Sigmoid colon (tissue), 7 donors: ENCODE measurements at regions of chr4 and their contacts with region 1.

Region 1: DNA sequence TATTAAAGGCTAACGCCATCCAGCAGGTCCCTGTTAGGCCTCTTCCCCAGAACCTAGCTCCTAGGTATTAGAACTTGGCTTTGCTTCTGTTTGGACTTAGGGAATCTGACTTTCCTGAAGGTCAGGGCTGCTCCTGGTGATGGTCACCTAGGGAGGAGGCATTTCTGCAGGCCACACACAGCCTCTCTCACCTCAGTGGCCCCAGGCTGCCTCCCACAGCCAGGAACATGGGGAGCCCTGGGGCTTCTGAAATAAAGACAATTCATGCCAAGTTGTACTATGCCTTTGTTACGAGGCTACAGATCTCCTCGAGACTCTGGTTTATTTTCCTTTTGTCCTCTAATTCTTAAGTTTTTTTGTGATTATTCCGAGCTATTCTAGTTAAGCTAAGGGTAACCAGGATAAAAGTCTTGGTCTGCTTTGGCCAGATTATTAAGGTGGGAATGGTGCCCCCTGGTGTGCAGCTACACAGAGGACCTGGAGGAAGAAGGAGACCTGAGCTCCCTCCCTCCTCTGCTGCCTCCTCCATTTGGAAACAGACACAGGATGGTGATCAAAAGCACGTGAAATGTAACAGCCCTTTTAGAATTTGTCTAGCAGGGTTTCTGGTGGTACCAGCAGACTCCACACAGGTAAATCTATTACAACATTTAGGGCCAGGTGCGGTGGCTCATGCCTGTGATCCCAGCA is 131.0 kb downstream of the DCLK2 start:
- DNase-seq: peak; percentile 80
- H3K4me3 ChIP-seq: no peak overlapping the region
- H3K27ac ChIP-seq: no peak overlapping the region
- H3K4me1 ChIP-seq: peaks cover 0 to 9% (median 0%) of the 10 kb centered on the region in 4 donors
- H3K27me3 ChIP-seq: no peaks in the 10 kb centered on the region
- CTCF ChIP-seq: peak in 3 of 4 experiments; percentile 51 to 53 (median 51)
- EP300 ChIP-seq: no peak
- POLR2A ChIP-seq: no peak

Region 2: GRCh38 chr4:149795256-149795655 is 414.0 kb before region 1 on chr4:
- intact Hi-C with region 1: no loop called
- DNase-seq: peak; percentile 33
- H3K4me3 ChIP-seq: no peak overlapping the region
- H3K27ac ChIP-seq: no peak overlapping the region
- H3K4me1 ChIP-seq: no peaks in the 10 kb centered on the region
- H3K27me3 ChIP-seq: no peaks in the 10 kb centered on the region
- CTCF ChIP-seq: no peak
- EP300 ChIP-seq: no peak
- POLR2A ChIP-seq: no peak

Region 3: GRCh38 chr4:149999485-150000074 is 209.7 kb before region 1 on chr4:
- intact Hi-C with region 1: loop called (anchors 1 kb)
- DNase-seq: peak; percentile 71
- H3K4me3 ChIP-seq: no peak overlapping the region
- H3K27ac ChIP-seq: no peak overlapping the region
- H3K4me1 ChIP-seq: peaks cover 0 to 46% (median 35%) of the 10 kb centered on the region in 4 donors
- H3K27me3 ChIP-seq: no peaks in the 10 kb centered on the region
- CTCF ChIP-seq: peak; percentile 57 to 75 (median 65)
- EP300 ChIP-seq: no peak
- POLR2A ChIP-seq: no peak

Region 4: DNA sequence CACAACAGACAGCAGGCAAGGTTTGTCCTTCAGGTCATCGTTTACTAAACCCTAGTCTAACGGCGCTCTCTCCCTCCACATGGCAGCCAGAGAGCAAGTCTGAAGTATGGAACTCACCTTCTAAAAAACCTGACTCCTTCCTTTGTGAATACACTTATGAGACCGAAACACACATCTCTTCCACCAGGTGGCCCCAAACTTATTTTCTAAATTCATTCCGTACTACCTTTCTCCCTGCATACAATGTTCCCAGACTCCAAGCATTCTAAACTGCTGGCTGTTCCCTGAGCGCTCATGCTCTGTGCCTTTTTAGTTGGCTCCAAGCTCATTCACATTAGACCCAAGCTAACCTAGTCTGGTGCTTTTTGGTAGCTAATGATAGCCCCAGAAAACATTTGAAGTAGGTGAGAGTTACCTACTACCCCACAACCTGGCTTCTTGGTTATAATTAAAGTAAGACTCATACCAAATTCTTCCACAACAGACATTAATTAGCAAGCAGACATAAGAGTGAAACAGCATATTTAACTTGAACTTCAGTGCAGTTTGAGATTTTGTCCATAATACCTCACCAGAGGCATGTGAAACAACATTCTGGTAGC is 198.7 kb before region 1 on chr4:
- intact Hi-C with region 1: loop called (anchors 5 kb)
- DNase-seq: no peak
- H3K4me3 ChIP-seq: no peak overlapping the region
- H3K27ac ChIP-seq: peak overlapping the region in 2 of 4 donors; percentile 16 to 35
- H3K4me1 ChIP-seq: peaks cover 0 to 32% (median 25%) of the 10 kb centered on the region in 4 donors
- H3K27me3 ChIP-seq: no peaks in the 10 kb centered on the region
- CTCF ChIP-seq: peak; percentile 22 to 66 (median 56)
- EP300 ChIP-seq: no peak
- POLR2A ChIP-seq: no peak

Region 5: DNA sequence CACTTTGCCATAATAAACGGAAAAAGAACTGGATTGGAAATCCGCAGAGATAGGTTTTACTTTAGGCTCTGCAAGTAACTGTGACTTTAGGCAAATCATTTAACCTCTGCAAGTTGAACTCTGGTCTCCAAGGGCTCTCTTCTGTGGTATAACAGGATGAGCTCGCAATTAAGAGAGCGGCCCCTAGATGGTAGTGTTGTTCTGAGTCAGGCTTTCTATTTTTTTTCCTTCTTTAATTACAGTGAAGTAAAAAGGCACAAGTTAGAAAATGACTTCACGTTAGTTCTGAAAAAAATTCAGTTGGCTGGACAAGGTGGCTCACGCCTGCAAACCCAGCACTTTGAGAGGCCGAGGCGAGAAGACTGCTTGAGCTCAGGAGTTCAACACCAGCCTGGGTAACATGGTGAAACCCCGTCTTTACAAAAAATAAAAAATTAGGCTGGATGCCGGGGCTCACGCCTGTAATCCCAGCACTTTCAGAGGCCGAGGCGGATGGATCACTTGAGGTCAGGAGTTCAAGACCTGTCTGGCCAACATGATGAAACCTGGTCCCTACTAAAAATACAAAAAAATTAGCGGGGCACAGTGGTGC is 908.2 kb after region 1 on chr4:
- intact Hi-C with region 1: no loop called
- DNase-seq: no peak
- H3K4me3 ChIP-seq: no peak overlapping the region
- H3K27ac ChIP-seq: peak overlapping the region in 3 of 4 donors; percentile 34 to 61 (median 43)
- H3K4me1 ChIP-seq: peaks cover 0 to 10% (median 2%) of the 10 kb centered on the region in 4 donors
- H3K27me3 ChIP-seq: no peaks in the 10 kb centered on the region
- CTCF ChIP-seq: peak; percentile 15 to 76 (median 50)
- EP300 ChIP-seq: no peak
- POLR2A ChIP-seq: no peak